Activated B cell treated with CpG ODN at 0.5 μM for 24 hours (primary cell): ENCODE measurements at regions of chr2 and their contacts with region 1.

Region 1: DNA sequence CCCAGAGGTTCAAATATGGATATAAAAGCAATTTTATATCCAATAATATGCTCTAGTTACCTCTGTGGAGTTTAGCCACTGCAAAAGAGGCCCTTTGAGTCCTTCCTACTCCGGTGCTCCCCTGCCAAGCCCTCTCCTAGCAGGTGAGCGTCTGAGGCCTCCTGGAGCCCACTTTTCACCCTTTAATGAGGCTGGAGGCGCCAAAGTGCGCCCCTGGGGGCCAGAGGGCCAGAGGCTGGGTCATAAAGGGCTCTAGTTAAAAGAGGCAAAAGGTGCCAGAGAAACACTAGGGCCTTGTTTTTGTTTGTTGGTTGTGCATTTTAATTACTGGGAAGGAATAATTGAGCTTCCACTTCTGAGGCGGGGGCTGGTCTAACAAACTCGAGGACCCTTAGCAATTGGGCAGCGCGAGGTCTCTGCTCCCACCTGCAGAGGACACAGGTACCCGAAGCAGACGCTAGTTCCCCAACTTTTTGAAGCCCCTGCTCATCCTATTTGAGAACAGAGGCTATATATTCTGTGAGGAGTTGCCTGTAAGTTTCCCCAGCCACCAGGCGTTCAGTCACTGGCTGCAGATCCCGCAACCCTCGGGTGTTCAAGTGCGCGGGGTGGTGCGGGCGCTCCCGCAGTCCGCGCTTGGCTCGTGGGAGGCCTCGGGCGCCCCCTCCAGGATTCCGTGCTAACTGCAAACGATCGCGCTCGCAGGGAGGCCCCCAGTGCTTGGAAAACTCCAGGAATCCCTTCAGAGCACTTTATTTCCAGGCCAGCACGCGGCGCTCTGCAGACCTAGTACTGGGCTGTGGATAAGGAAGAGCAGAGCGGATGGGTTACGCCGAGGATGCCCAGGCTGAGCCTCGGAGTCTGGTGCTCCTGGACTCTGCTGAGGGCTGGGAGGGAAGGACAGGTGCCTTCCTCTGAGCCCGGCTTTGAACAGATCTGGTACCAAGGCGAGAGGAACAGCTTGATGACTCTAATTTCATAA is 14.1 kb downstream of the MSGN1 start:
- DNase-seq: peak; percentile 77
- ATAC-seq: peak; percentile 91
- H3K4me3 Mint-ChIP-seq: peak overlapping the region; percentile 70
- H3K27ac Mint-ChIP-seq: peak overlapping the region; percentile 46
- H3K4me1 Mint-ChIP-seq: peaks cover 44% of the 10 kb centered on the region
- H3K27me3 Mint-ChIP-seq: no peaks in the 10 kb centered on the region
- CTCF ChIP-seq: peak; percentile 45

Region 2: GRCh38 chr2:17035010-17035409 is 795.3 kb before region 1 on chr2:
- CTCF ChIA-PET with region 1: no interaction called
- POLR2A ChIA-PET with region 1: no interaction called
- intact Hi-C with region 1: no loop called
- DNase-seq: no peak
- ATAC-seq: no peak
- H3K4me3 Mint-ChIP-seq: no peak overlapping the region
- H3K27ac Mint-ChIP-seq: no peak overlapping the region
- H3K4me1 Mint-ChIP-seq: no peaks in the 10 kb centered on the region
- H3K27me3 Mint-ChIP-seq: peaks cover 9% of the 10 kb centered on the region
- CTCF ChIP-seq: no peak

Region 3: DNA sequence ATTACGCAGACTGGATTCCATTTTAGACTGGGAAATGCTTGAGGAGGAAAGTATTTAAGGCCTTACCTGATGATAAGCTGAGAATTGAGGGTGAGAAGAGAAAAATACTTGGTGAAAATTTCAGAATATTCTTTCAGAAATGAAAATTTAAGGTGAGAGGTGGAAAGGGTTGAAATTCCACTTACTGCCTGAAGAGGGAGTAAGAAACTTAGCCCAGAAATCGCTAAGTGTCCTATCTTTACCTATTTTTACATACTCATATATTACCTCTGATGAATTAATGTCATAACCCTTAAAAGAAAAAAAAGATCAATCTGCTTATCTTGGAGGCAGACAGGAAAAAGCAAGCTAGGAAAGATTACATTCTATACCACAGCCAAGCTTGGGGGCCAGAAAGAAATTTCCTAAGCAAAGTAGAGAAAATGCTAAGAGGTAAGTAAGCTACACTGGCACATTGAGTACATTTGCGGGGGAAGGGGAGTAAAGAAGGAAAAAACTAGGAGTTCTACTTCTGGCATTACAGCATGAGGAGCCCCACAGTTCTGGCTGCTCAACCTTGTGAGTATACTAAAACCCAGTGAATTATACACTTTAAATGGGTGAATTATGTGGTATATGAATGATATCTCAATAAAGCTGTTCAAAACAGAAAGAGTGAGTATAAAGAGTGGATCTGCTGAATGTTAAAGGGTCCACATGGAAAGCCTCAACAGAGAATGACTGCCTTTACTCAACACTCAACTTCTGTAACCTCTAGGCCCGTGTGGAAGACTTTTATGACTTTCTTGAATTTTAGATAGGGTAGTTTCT is 110.6 kb before region 1 on chr2:
- CTCF ChIA-PET with region 1: interaction called, 24 read pairs
- POLR2A ChIA-PET with region 1: interaction called, 3 read pairs
- intact Hi-C with region 1: loop called (anchors 1 kb)
- DNase-seq: no peak
- ATAC-seq: peak; percentile 70
- H3K4me3 Mint-ChIP-seq: no peak overlapping the region
- H3K27ac Mint-ChIP-seq: peak overlapping the region; percentile 78
- H3K4me1 Mint-ChIP-seq: peaks cover 3% of the 10 kb centered on the region
- H3K27me3 Mint-ChIP-seq: no peaks in the 10 kb centered on the region
- CTCF ChIP-seq: peak; percentile 44

Region 4: GRCh38 chr2:17780546-17780945 is 49.8 kb before region 1 on chr2:
- CTCF ChIA-PET with region 1: interaction called, 11 read pairs
- POLR2A ChIA-PET with region 1: interaction called, 4 read pairs
- intact Hi-C with region 1: loop called (anchors 1 kb)
- DNase-seq: no peak
- ATAC-seq: no peak
- H3K4me3 Mint-ChIP-seq: no peak overlapping the region
- H3K27ac Mint-ChIP-seq: no peak overlapping the region
- H3K4me1 Mint-ChIP-seq: peaks cover 11% of the 10 kb centered on the region
- H3K27me3 Mint-ChIP-seq: no peaks in the 10 kb centered on the region
- CTCF ChIP-seq: no peak

Region 5: DNA sequence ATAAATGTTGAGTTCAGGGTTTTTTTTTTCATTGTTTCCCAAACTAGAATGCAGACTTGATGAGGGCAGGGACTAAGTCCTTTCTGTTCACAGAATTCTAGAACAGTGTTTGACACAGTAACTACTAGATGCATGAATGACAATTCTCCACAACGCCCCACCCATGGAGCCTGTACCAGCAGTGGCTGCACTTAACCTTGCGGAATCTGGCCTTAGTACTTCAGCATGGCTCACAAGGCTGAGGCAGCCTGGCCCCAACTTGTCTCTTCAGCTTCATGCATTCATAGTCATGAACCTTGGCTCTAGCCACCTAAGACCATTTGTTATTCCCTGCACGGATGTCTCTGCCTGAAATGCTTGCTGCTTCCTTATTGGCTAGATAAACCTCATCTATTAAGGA is 43.6 kb before region 1 on chr2:
- CTCF ChIA-PET with region 1: interaction called, 11 read pairs
- POLR2A ChIA-PET with region 1: interaction called, 3 read pairs
- intact Hi-C with region 1: loop called (anchors 1 kb)
- DNase-seq: no peak
- ATAC-seq: no peak
- H3K4me3 Mint-ChIP-seq: no peak overlapping the region
- H3K27ac Mint-ChIP-seq: peak overlapping the region; percentile 56
- H3K4me1 Mint-ChIP-seq: peaks cover 31% of the 10 kb centered on the region
- H3K27me3 Mint-ChIP-seq: no peaks in the 10 kb centered on the region
- CTCF ChIP-seq: no peak

Region 6: GRCh38 chr2:17804358-17804757 is 26.0 kb before region 1 on chr2:
- CTCF ChIA-PET with region 1: interaction called, 7 read pairs
- POLR2A ChIA-PET with region 1: interaction called, 26 read pairs
- intact Hi-C with region 1: loop called (anchors 1 kb)
- DNase-seq: no peak
- ATAC-seq: peak; percentile 82
- H3K4me3 Mint-ChIP-seq: peak overlapping the region; percentile 76
- H3K27ac Mint-ChIP-seq: peak overlapping the region; percentile 97
- H3K4me1 Mint-ChIP-seq: peaks cover 84% of the 10 kb centered on the region
- H3K27me3 Mint-ChIP-seq: no peaks in the 10 kb centered on the region
- CTCF ChIP-seq: no peak

Region 7: DNA sequence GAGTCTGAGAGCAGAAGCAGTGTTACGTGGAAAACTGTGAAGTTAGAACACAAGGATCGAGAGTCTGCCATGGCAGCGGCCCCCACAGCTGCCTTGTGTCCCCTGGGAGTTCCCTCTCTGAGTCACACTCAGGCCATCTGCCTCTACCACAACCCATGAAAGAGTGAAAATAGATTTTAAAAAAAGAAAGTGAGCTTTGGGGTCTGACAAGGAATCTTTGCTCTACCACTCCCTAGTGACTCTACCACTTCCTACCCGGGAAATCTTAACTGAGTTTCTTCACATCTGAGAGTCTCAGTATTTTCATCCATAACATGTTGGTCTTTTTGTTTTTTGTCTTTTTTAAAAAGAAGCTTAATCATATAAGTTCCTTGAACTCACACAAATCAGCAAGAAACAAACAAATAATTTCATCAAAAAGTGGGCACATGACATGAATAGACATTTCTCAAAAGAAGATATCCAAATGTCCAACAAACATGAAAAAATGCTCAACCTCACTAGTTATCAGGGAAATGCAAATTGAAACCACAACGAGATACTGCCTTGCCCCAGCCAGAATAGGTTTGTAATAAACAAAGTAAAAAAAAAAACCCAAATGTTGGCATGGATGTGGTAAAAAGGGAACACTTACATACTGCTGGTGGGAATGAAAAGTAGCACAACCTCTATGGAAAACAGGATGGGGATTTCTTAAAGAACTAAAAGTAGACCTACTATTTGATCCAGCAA is 16.4 kb before region 1 on chr2:
- CTCF ChIA-PET with region 1: interaction called, 5 read pairs
- POLR2A ChIA-PET with region 1: interaction called, 98 read pairs
- intact Hi-C with region 1: loop called (anchors 2 kb)
- DNase-seq: peak; percentile 56
- ATAC-seq: peak; percentile 82
- H3K4me3 Mint-ChIP-seq: peak overlapping the region; percentile 81
- H3K27ac Mint-ChIP-seq: peak overlapping the region; percentile 97
- H3K4me1 Mint-ChIP-seq: peaks cover 81% of the 10 kb centered on the region
- H3K27me3 Mint-ChIP-seq: no peaks in the 10 kb centered on the region
- CTCF ChIP-seq: no peak